Dendritic cell treated with granulocyte-macrophage colony-stimulating factor and Interleukin-4, amounts not matched to agents 40 ng/mL and 50 ng/mL, for 4 days (primary cell): ENCODE measurements at regions of chr9 and their contacts with region 1.

Region 1: DNA sequence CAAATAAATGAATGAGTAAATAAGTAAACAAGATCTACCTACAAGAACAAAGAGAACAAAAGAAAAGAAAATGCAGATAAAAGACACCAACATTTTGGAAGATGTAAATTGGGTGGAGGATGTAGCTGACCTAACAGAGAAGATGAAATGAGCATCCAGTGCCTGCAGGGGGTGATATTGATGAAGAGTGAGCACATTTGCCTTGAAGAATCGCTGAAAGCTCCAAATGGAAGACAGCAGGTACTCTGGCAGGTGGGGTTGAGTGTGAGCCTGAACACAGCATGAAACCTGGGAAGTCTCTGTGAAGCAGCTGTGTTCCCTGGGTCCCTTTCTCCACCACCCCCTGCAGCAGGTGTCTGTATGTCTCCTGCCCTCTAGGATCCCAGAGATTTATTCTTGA is 125.6 kb downstream of the NXNL2 start:
- H3K4me3 Mint-ChIP-seq: no peak overlapping the region
- H3K27ac Mint-ChIP-seq: no peak overlapping the region
- H3K4me1 Mint-ChIP-seq: no peaks in the 10 kb centered on the region
- H3K27me3 Mint-ChIP-seq: peaks cover 2% of the 10 kb centered on the region

Region 2: GRCh38 chr9:89000973-89001916 is 340.6 kb after region 1 on chr9:
- intact Hi-C with region 1: loop called (anchors 5 kb)
- H3K4me3 Mint-ChIP-seq: no peak overlapping the region
- H3K27ac Mint-ChIP-seq: no peak overlapping the region
- H3K4me1 Mint-ChIP-seq: peaks cover 14% of the 10 kb centered on the region
- H3K27me3 Mint-ChIP-seq: no peaks in the 10 kb centered on the region